AG04450 (cell line): ENCODE measurements at regions of chr10 and their contacts with region 1.

Region 1: GRCh38 chr10:69800109-69800508 is 1.6 kb upstream of the COL13A1 start:
- DNase-seq: peak; percentile 57
- H3K4me3 ChIP-seq: no peak overlapping the region
- H3K27ac ChIP-seq: no peak overlapping the region
- H3K27me3 ChIP-seq: peaks cover 14% of the 10 kb centered on the region
- CTCF ChIP-seq: peak; percentile 94

Region 2: GRCh38 chr10:69696073-69696731 is 103.9 kb before region 1 on chr10:
- CTCF ChIA-PET with region 1: interaction called, 20 read pairs
- POLR2A ChIA-PET with region 1: interaction called, 5 read pairs
- DNase-seq: peak; percentile 69
- H3K4me3 ChIP-seq: no peak overlapping the region
- H3K27ac ChIP-seq: no peak overlapping the region
- H3K27me3 ChIP-seq: peaks cover 19% of the 10 kb centered on the region
- CTCF ChIP-seq: peak; percentile 73

Region 3: GRCh38 chr10:69728335-69728870 is 71.7 kb before region 1 on chr10:
- CTCF ChIA-PET with region 1: interaction called, 11 read pairs
- POLR2A ChIA-PET with region 1: no interaction called
- DNase-seq: no peak
- H3K4me3 ChIP-seq: no peak overlapping the region
- H3K27ac ChIP-seq: no peak overlapping the region
- H3K27me3 ChIP-seq: peaks cover 11% of the 10 kb centered on the region
- CTCF ChIP-seq: no peak

Region 4: DNA sequence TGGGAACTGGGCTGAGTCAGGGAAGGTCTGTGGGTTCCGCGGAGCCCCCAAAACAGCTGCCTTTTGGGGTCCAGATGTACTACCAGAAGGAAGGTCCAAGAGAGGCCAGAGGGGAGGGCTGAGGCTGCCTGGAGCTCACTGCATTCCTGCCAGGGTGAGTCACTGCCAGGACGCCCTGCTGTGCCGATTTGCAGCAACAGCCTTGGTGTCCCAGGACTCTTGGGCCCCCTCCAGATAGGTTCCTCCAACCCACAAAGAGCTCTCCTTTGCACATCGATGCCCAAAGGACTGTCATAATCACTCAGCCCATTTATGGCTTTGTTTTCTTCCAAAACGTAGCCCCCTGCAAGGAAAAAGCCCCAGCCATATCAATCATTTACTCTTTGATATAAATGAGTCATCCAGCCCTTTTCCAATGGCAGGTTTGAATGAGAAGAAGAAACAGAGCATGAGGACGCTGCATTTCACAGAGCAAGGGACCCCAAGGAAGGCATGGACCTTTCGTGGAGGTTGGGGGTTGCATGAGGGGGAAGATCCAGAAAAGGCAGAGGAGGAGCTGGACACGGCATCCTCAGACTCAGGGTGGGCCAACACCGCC is 30.6 kb before region 1 on chr10:
- CTCF ChIA-PET with region 1: interaction called, 12 read pairs
- POLR2A ChIA-PET with region 1: no interaction called
- DNase-seq: peak; percentile 33
- H3K4me3 ChIP-seq: no peak overlapping the region
- H3K27ac ChIP-seq: peak overlapping the region; percentile 61
- H3K27me3 ChIP-seq: peaks cover 4% of the 10 kb centered on the region
- CTCF ChIP-seq: no peak